ENCODE measurements at regions of chr13 and their contacts with region 1.

Region 1: DNA sequence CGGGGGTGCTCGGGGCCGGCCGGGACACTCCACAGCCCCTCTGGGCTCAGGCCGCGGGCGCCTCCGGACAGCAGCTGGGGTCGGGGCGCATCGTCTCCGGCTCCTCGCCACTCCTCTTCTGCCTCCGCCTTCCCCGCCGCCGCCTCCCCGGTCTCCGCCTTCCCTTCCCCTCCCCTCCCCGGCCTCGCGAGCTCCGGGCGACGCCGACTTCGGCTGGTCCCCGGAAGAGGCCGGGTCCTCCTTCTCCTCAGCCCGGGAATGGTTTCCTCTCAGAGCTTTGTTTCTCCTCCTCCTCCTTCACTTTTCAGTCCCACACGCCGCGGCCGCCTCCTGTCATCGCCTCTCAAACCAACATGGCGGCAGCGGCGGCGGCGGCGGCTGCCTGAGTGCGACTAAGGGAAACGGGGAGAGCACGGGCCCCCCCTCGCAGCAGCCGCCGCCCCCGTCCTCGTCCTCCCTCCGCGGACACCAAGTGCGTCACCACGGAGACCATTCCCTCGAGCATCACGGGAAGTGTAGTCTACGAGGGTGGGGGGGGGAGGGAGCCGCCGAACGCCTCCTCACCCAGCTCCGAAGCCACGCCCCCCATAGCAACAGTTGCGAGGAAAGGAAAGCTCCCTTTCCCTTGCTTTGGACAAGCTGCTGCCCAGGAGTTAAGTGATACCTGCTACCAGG is at the start of gene UBL3:
- DNase-seq: peak; percentile 89 to 97 (median 93)
- ATAC-seq: peak; percentile 87
- H3K4me3 ChIP-seq: peak within 1 kb of the TSS; percentile 82
- H3K4me3 Mint-ChIP-seq: peak within 1 kb of the TSS; percentile 99
- H3K27ac ChIP-seq: peak within 1 kb of the TSS; percentile 92 to 93
- H3K27ac Mint-ChIP-seq: peak within 1 kb of the TSS; percentile 86
- H3K4me1 ChIP-seq: peaks cover 4% of the 10 kb centered on the region
- H3K4me1 Mint-ChIP-seq: peaks cover 20% of the 10 kb centered on the region
- H3K27me3 ChIP-seq: no peaks in the 10 kb centered on the region
- H3K27me3 Mint-ChIP-seq: no peaks in the 10 kb centered on the region
- CTCF ChIP-seq: no peak
- total RNA-seq, gene UBL3: 39.5 to 41.9 TPM

Region 2: DNA sequence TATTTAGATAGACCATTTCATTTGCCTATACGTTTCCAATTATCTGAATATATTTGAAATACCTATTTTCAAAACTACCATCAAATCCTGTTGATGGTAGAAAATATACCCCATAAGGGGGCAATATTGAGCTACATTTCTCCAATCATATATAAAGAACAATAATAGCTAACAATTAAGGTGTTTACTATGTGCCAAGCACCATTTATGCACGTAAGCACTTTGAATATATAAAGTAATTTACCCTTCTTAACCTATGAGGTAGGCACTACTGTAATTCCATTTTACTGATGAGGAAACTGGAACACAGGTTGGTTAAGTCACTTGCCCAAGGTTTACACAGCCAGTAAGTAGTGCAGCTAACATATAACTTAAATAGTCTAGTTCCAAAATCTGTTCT is 79.1 kb before region 1 on chr13:
- CTCF ChIA-PET with region 1: interaction called, 3 read pairs
- POLR2A ChIA-PET with region 1: interaction called, 4 read pairs
- intact Hi-C with region 1: loop called (anchors 2 to 5 kb)
- DNase-seq: peak in 3 of 14 experiments; percentile 64 to 69 (median 67)
- ATAC-seq: peak; percentile 75
- H3K4me3 ChIP-seq: no peak overlapping the region
- H3K4me3 Mint-ChIP-seq: no peak overlapping the region
- H3K27ac ChIP-seq: no peak overlapping the region
- H3K27ac Mint-ChIP-seq: no peak overlapping the region
- H3K4me1 ChIP-seq: no peaks in the 10 kb centered on the region
- H3K4me1 Mint-ChIP-seq: peaks cover 8% of the 10 kb centered on the region
- H3K27me3 ChIP-seq: no peaks in the 10 kb centered on the region
- H3K27me3 Mint-ChIP-seq: no peaks in the 10 kb centered on the region
- CTCF ChIP-seq: peak; percentile 78

Region 3: GRCh38 chr13:29902101-29902952 is 52.0 kb after region 1 on chr13:
- CTCF ChIA-PET with region 1: no interaction called
- POLR2A ChIA-PET with region 1: interaction called, 15 read pairs
- intact Hi-C with region 1: loop called (anchors 5 kb)
- DNase-seq: peak in 11 of 14 experiments; percentile 3 to 74 (median 17)
- ATAC-seq: peak; percentile 69
- H3K4me3 ChIP-seq: peak overlapping the region; percentile 45
- H3K4me3 Mint-ChIP-seq: peak overlapping the region; percentile 84
- H3K27ac ChIP-seq: peak overlapping the region in 1 of 2 donors; percentile 37
- H3K27ac Mint-ChIP-seq: peak overlapping the region; percentile 60
- H3K4me1 ChIP-seq: peaks cover 20% of the 10 kb centered on the region
- H3K4me1 Mint-ChIP-seq: peaks cover 27% of the 10 kb centered on the region
- H3K27me3 ChIP-seq: no peaks in the 10 kb centered on the region
- H3K27me3 Mint-ChIP-seq: no peaks in the 10 kb centered on the region
- CTCF ChIP-seq: no peak

Region 4: DNA sequence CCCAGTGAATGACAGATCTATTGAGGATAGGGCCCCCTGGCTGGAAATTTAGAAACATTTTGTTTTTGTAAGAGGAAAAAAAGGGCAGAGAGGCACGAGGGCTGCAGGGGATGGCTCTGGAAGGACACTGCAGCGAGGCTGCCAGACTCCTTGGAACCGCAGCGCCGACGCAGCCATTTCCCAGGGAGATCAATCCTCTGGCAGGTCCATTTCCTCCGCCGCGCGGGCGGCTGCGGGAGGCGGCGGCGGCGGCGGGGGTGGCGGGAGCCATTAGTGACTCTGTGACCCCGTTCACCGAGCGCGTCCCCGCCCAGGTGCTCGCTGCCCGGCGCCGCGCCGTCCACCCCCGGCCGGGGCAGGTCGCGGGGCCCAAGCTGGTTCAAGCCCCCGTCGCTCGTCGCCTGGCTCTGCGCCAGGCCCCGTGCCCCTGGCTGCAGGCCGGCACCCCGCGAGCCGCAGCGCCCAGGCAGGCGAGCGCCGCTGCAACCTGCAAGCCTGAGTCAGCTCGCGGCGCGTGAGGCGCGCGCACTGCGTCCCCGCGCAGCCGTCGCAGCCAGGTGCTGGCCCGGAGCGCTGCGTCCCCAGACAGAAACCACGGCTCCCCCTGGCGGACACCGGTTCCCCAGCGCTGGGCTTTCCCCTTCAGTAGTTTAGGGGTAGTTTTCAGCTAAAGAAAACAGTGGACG is 264.4 kb after region 1 on chr13:
- CTCF ChIA-PET with region 1: interaction called, 8 read pairs
- POLR2A ChIA-PET with region 1: interaction called, 61 read pairs
- intact Hi-C with region 1: loop called (anchors 1 kb)
- DNase-seq: peak; percentile 85 to 97 (median 95)
- ATAC-seq: peak; percentile 88
- H3K4me3 ChIP-seq: peak overlapping the region; percentile 53
- H3K4me3 Mint-ChIP-seq: peak overlapping the region; percentile 91
- H3K27ac ChIP-seq: no peak overlapping the region
- H3K27ac Mint-ChIP-seq: peak overlapping the region; percentile 78
- H3K4me1 ChIP-seq: peaks cover 29% of the 10 kb centered on the region
- H3K4me1 Mint-ChIP-seq: peaks cover 44% of the 10 kb centered on the region
- H3K27me3 ChIP-seq: no peaks in the 10 kb centered on the region
- H3K27me3 Mint-ChIP-seq: no peaks in the 10 kb centered on the region
- CTCF ChIP-seq: peak; percentile 86

Measured in CD4-positive, alpha-beta T cell (primary cell).